ENCODE measurements at regions of chr4 and their contacts with region 1.

Region 1: GRCh38 chr4:154618708-154619315 is 6.4 kb upstream of the FGG start:
- DNase-seq: peak; percentile 8
- H3K4me3 ChIP-seq: no peak overlapping the region
- H3K27ac ChIP-seq: no peak overlapping the region
- H3K27me3 ChIP-seq: peaks cover 2% of the 10 kb centered on the region
- CTCF ChIP-seq: peak; percentile 84

Region 2: GRCh38 chr4:154073107-154073822 is 545.5 kb before region 1 on chr4:
- CTCF ChIA-PET with region 1: no interaction called
- POLR2A ChIA-PET with region 1: no interaction called
- DNase-seq: no peak
- H3K4me3 ChIP-seq: no peak overlapping the region
- H3K27ac ChIP-seq: no peak overlapping the region
- H3K27me3 ChIP-seq: no peaks in the 10 kb centered on the region
- CTCF ChIP-seq: no peak

Region 3: GRCh38 chr4:154559494-154560418 is 59.1 kb before region 1 on chr4:
- CTCF ChIA-PET with region 1: interaction called, 183 read pairs
- POLR2A ChIA-PET with region 1: interaction called, 3 read pairs
- DNase-seq: no peak
- H3K4me3 ChIP-seq: no peak overlapping the region
- H3K27ac ChIP-seq: no peak overlapping the region
- H3K27me3 ChIP-seq: no peaks in the 10 kb centered on the region
- CTCF ChIP-seq: peak; percentile 64

Region 4: DNA sequence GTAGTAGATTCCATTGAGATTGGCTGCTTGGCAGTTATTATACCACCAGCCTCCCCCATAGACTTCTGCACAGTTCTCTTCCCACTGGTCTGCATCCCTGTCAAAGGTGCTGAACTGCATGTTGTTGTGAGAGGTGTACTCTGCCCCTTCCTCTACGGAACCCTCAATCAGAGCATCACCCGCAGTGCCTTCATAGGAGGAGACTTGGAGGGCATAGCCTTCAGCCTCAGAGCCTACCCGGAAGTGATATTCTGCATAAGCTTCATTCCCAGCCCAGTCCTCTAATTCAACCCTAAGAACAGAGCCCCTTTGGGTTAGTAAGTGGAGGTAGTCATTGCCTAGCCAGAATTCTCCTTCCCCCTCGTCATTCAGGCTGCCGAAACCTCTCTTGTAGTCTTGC is 34.6 kb before region 1 on chr4:
- CTCF ChIA-PET with region 1: interaction called, 10 read pairs
- POLR2A ChIA-PET with region 1: no interaction called
- DNase-seq: no peak
- H3K4me3 ChIP-seq: no peak overlapping the region
- H3K27ac ChIP-seq: no peak overlapping the region
- H3K27me3 ChIP-seq: no peaks in the 10 kb centered on the region
- CTCF ChIP-seq: no peak

Region 5: GRCh38 chr4:154595807-154596206 is 23.0 kb before region 1 on chr4:
- CTCF ChIA-PET with region 1: interaction called, 16 read pairs
- POLR2A ChIA-PET with region 1: no interaction called
- DNase-seq: no peak
- H3K4me3 ChIP-seq: no peak overlapping the region
- H3K27ac ChIP-seq: no peak overlapping the region
- H3K27me3 ChIP-seq: no peaks in the 10 kb centered on the region
- CTCF ChIP-seq: no peak

Region 6: DNA sequence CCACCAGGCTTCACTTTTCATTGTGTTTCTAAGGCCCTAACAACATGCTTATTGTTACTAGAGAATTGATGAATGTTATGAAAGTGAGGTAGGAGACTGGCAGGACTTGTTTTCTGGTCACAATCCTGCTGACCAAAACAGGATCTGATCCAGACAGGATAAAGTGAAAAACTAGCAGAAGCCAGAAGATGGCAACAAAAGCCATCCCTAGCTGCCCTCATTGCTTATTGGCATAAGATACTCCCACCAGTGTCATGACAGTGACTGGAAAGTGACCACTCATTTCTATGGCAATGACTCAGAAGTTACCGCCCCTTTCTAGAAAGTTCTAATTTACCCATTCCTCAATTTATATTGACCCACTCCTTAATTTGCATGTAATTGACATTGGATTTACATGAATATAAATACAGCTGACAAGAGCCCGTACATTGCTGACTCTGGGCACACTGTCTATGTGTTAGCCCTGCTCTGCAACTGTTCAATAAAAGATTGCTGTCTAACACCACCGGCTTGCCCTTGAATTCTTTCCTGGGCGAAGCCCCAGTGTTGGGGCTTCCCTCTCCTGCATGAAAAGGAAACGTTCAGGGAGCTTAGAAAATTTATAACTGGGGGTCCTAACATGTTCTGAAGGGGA is 23.7 kb after region 1 on chr4:
- CTCF ChIA-PET with region 1: interaction called, 20 read pairs
- POLR2A ChIA-PET with region 1: no interaction called
- DNase-seq: no peak
- H3K4me3 ChIP-seq: no peak overlapping the region
- H3K27ac ChIP-seq: no peak overlapping the region
- H3K27me3 ChIP-seq: no peaks in the 10 kb centered on the region
- CTCF ChIP-seq: no peak

Measured in AG04450 (cell line).